ENCODE measurements at regions of chr6 and their contacts with region 1.

Region 1: GRCh38 chr6:40845553-40845952 is 193.5 kb downstream of the UNC5CL start:
- DNase-seq: peak; percentile 69
- ATAC-seq: peak; percentile 77
- H3K4me3 ChIP-seq: no peak overlapping the region
- H3K27ac ChIP-seq: no peak overlapping the region
- H3K4me1 ChIP-seq: no peaks in the 10 kb centered on the region
- H3K27me3 ChIP-seq: peaks cover 43% of the 10 kb centered on the region
- CTCF ChIP-seq: peak; percentile 75

Region 2: DNA sequence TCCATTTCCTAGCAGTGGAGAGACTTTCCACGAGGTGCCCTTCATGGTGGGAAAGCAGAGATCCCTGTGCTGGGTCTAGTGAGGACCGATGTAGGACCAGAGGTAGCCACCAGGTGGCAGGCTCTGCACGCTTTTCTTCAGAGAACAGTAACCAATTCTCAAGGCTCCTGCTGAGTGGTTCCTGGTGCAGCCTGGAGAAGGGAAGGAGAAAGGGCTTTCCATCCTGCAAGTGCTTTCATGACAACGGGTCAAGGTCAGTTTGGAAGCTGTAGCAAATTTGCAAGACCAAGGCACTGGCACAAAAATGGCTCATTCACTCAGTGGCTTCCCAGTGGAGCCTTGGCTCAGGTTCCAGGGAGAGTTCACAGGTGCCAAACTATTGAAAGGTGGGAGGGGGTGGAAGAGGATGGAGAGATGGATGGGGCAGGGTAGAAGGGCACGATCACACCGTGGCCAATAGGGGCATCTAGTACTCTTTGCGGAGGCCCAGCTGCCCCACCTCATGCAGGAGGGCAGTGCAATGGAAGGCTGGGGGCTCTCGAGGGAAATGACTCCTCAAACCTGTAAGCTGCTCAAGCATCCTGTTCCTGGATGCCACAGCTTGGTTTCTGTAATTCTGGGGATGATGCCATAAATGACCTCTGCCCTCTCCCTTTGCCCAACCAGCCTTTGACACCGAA is 1497.5 kb before region 1 on chr6:
- CTCF ChIA-PET with region 1: no interaction called
- POLR2A ChIA-PET with region 1: no interaction called
- intact Hi-C with region 1: loop called (anchors 5 kb)
- DNase-seq: peak; percentile 73
- ATAC-seq: peak; percentile 88
- H3K4me3 ChIP-seq: no peak overlapping the region
- H3K27ac ChIP-seq: no peak overlapping the region
- H3K4me1 ChIP-seq: no peaks in the 10 kb centered on the region
- H3K27me3 ChIP-seq: peaks cover 27% of the 10 kb centered on the region
- CTCF ChIP-seq: peak; percentile 88

Region 3: GRCh38 chr6:39980839-39981580 is 864.5 kb before region 1 on chr6:
- CTCF ChIA-PET with region 1: no interaction called
- POLR2A ChIA-PET with region 1: no interaction called
- intact Hi-C with region 1: loop called (anchors 5 kb)
- DNase-seq: peak; percentile 50
- ATAC-seq: peak; percentile 56
- H3K4me3 ChIP-seq: no peak overlapping the region
- H3K27ac ChIP-seq: no peak overlapping the region
- H3K4me1 ChIP-seq: no peaks in the 10 kb centered on the region
- H3K27me3 ChIP-seq: no peaks in the 10 kb centered on the region
- CTCF ChIP-seq: peak; percentile 55

Region 4: GRCh38 chr6:40719671-40720374 is 125.7 kb before region 1 on chr6:
- CTCF ChIA-PET with region 1: no interaction called
- POLR2A ChIA-PET with region 1: no interaction called
- intact Hi-C with region 1: no loop called
- DNase-seq: no peak
- ATAC-seq: no peak
- H3K4me3 ChIP-seq: no peak overlapping the region
- H3K27ac ChIP-seq: no peak overlapping the region
- H3K4me1 ChIP-seq: peaks cover 10% of the 10 kb centered on the region
- H3K27me3 ChIP-seq: no peaks in the 10 kb centered on the region
- CTCF ChIP-seq: no peak

Region 5: GRCh38 chr6:40774932-40775331 is 70.6 kb before region 1 on chr6:
- CTCF ChIA-PET with region 1: no interaction called
- POLR2A ChIA-PET with region 1: no interaction called
- intact Hi-C with region 1: no loop called
- DNase-seq: no peak
- ATAC-seq: no peak
- H3K4me3 ChIP-seq: no peak overlapping the region
- H3K27ac ChIP-seq: no peak overlapping the region
- H3K4me1 ChIP-seq: peaks cover 22% of the 10 kb centered on the region; the same call in 1 of the 2 replicates
- H3K27me3 ChIP-seq: 0 out of 2 replicates have a peak, but pooled peaks cover 8% of the 10 kb centered on the region
- CTCF ChIP-seq: no peak

Measured in PC-3 (cell line).